Right ventricle myocardium superior (tissue), 1 donor: ENCODE measurements at regions of chr6 and their contacts with region 1.

Region 1: DNA sequence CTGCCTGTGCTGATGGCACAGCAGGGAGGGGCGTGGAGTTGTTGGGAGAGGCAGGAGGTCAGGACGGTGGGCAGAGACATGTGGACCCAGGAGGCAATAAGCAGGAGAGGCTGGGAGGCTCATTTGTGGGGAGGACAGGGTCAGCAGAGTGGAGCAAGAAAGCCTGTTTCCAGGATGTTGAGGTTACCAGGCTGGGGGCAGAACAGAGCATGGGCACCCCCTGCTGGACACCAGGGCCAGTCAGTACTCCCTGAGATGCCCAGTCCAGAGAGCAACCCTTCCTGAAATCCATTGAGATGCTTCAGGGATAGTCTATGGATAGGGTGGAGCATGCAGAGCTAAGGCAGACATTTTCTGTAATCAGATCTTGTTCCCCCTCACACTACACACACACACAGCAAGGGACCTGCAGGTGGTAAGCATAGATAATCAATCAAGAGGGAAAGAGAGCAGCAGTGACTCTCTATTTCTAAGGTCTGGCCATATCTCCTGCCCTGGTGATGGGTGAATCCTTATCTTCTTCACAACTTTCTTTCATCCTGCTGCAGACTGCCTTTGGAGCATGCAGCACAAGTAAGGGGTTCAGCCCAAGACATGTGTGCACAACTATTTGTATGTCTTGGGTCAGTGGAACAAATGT is 41.7 kb downstream of the MOCS1 start:
- DNase-seq: peak; percentile 83
- ATAC-seq: peak; percentile 62

Region 2: DNA sequence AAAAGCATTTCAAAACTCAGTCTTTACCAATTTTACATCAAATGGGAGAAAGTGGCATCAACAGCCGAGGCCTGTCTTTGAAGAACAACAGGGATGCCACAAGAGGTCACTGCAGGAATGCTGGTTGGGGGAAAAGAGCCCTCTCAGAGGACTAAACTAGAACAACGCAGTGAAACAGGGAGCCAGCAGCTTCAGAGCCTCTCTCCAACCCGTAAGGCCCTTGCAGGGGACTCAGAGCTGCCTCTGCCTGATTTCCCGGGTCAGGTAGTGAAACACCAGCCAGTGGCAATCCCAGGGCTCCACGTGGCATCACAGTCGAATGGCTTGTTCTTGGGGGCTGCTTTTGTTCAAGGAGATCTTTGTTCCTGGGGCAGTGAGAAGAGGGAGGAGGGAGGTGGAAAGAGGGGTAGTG is 515.1 kb before region 1 on chr6:
- intact Hi-C with region 1: loop called (anchors 2 kb)
- DNase-seq: peak; percentile 46
- ATAC-seq: peak; percentile 92

Region 3: DNA sequence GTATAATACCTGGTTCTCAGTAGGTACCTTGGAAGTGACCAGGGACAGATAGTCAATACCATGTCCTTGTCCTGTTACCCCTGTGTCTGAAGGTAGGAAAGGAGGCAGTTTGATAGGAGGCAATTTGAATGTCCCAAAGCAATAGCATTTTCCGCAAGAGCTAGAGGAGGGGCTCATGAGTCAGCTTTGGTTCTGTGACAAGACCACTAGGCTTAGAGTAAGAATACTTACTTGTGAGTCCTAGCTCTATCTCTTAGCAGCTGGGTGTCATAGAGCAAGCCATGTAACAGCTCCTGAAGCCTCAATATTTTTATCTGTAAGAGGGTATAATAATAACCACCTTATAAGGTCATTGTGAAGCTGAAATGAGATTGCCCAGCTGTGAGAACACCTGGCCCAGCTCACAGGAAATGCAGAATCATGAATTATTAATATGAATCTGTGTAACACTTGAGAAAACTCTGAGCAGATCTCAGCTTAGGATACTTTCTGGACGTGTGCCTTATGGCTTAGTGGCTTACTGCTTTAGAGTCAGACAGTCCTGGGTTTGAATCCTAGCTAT is 41.8 kb before region 1 on chr6:
- intact Hi-C with region 1: no loop called
- DNase-seq: no peak
- ATAC-seq: no peak